Activated CD8-positive, alpha-beta T cell treated with anti-CD3 and anti-CD28 coated beads for 36 hours (primary cell): ENCODE measurements at regions of chr19 and their contacts with region 1.

Region 1: DNA sequence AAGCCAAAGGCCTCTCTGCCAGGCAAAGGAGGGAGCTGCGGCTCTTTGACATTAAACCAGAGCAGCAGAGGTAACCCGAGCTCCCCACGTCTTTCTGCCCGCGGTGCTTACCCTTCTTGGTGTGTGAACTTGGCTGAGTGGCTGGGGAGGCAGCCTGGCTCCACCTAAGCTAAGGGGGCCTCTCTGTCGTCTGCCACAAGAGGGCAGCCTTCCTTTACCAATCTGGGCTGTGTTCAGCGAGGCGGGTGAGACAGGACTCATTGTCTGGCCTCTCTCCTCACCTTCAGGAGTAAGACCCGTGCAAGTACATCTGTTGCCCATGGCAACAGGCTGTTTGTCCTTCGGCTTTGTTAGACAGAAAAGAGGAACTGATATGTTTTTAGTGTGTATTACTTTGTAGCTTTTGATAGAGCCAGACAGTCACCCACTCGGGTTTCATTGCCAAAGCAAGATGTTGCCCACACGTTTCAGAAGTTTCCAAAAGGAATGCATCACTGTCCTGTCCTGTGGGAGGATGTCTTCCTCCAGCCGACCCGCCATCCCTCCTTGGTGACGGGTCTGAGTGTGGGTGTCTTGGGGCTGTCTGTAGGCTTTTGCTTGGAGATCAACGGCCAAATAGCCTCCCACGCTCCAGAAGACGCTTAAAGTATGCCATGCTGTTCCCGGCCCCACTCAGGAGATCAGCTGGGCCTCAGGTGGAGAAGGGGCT is 4.6 kb downstream of the POP4 start:
- DNase-seq: peak; percentile 92
- ATAC-seq: peak; percentile 74
- H3K4me3 Mint-ChIP-seq: no peak overlapping the region
- H3K27ac Mint-ChIP-seq: peak overlapping the region; percentile 39
- H3K4me1 Mint-ChIP-seq: peaks cover 25% of the 10 kb centered on the region
- H3K27me3 Mint-ChIP-seq: no peaks in the 10 kb centered on the region
- CTCF ChIP-seq: peak; percentile 86

Region 2: GRCh38 chr19:29564574-29565005 is 46.1 kb before region 1 on chr19:
- CTCF ChIA-PET with region 1: no interaction called
- POLR2A ChIA-PET with region 1: no interaction called
- intact Hi-C with region 1: no loop called
- DNase-seq: peak; percentile 33
- ATAC-seq: peak; percentile 87
- H3K4me3 Mint-ChIP-seq: no peak overlapping the region
- H3K27ac Mint-ChIP-seq: no peak overlapping the region
- H3K4me1 Mint-ChIP-seq: peaks cover 14% of the 10 kb centered on the region
- H3K27me3 Mint-ChIP-seq: peaks cover 27% of the 10 kb centered on the region
- CTCF ChIP-seq: no peak

Region 3: DNA sequence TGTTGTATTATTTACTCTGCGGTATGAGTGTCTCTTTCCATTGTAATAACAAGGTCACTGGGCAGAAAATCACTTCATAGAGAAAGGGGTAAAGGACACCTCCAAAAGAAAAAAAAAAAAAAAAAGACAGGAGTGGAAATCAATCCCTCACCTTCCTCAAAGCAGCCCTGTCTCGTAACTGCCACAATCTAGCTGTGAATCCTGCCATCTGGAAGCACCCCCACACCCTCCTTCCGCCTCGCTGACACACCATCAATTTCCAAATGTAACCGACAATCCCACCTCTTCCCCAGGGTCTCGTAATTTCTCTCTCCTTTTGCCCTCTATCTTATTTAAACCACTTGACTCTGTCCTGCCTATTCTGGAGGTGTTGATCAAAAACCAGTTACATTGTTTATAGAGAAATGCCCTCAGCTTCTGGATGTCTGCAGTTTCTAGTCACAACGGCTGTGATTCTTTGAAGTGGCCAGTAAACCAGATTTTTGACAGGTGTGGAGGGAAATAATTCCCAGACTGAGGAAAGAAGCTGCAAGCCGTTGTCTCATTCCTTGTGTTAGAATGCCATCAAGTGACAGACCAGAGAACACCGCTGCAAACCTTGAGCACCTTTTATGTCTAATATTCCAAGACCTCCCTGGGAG is 13.7 kb before region 1 on chr19:
- CTCF ChIA-PET with region 1: interaction called, 11 read pairs
- POLR2A ChIA-PET with region 1: interaction called, 8 read pairs
- intact Hi-C with region 1: no loop called
- DNase-seq: no peak
- ATAC-seq: no peak
- H3K4me3 Mint-ChIP-seq: no peak overlapping the region
- H3K27ac Mint-ChIP-seq: no peak overlapping the region
- H3K4me1 Mint-ChIP-seq: no peaks in the 10 kb centered on the region
- H3K27me3 Mint-ChIP-seq: peaks cover 14% of the 10 kb centered on the region
- CTCF ChIP-seq: peak; percentile 48

Region 4: GRCh38 chr19:29665215-29665825 is 54.6 kb after region 1 on chr19 and contains the start of gene PLEKHF1:
- CTCF ChIA-PET with region 1: interaction called, 66 read pairs
- POLR2A ChIA-PET with region 1: interaction called, 36 read pairs
- intact Hi-C with region 1: no loop called
- DNase-seq: peak; percentile 87
- ATAC-seq: peak; percentile 79
- H3K4me3 Mint-ChIP-seq: peak within 1 kb of the TSS; percentile 88
- H3K27ac Mint-ChIP-seq: peak within 1 kb of the TSS; percentile 90
- H3K4me1 Mint-ChIP-seq: peaks cover 66% of the 10 kb centered on the region
- H3K27me3 Mint-ChIP-seq: no peaks in the 10 kb centered on the region
- CTCF ChIP-seq: no peak
- total RNA-seq, gene PLEKHF1: 30.4 to 31.7 TPM

Region 5: DNA sequence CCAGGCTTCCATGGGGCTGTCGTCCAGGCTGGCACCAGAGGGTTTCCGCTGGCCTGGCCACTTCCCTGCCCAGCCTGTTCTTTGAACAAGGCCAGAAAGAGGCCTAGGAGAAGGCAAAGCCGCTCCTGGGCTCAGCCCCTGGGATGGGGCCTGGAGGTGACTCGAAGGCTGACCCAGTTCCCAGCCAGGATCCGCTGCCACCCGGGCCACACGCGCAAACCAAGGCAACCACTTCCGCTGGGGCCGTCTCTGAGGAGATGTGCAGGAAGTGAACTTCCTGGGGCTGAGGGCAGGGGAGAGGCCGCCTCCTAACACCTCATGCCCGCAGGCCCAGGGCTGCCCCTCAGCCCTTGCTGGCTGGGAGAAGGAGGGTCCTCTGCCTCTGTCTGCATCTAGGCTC is 69.7 kb after region 1 on chr19:
- CTCF ChIA-PET with region 1: interaction called, 49 read pairs
- POLR2A ChIA-PET with region 1: interaction called, 9 read pairs
- intact Hi-C with region 1: no loop called
- DNase-seq: peak; percentile 92
- ATAC-seq: peak; percentile 90
- H3K4me3 Mint-ChIP-seq: peak overlapping the region; percentile 52
- H3K27ac Mint-ChIP-seq: peak overlapping the region; percentile 83
- H3K4me1 Mint-ChIP-seq: peaks cover 72% of the 10 kb centered on the region
- H3K27me3 Mint-ChIP-seq: no peaks in the 10 kb centered on the region
- CTCF ChIP-seq: no peak

Region 6: GRCh38 chr19:29694669-29695627 is 84.2 kb after region 1 on chr19:
- CTCF ChIA-PET with region 1: interaction called, 217 read pairs
- POLR2A ChIA-PET with region 1: interaction called, 20 read pairs
- intact Hi-C with region 1: loop called (anchors 1 kb)
- DNase-seq: peak; percentile 91
- ATAC-seq: peak; percentile 96
- H3K4me3 Mint-ChIP-seq: no peak overlapping the region
- H3K27ac Mint-ChIP-seq: peak overlapping the region; percentile 21
- H3K4me1 Mint-ChIP-seq: peaks cover 7% of the 10 kb centered on the region
- H3K27me3 Mint-ChIP-seq: no peaks in the 10 kb centered on the region
- CTCF ChIP-seq: peak; percentile 96

Region 7: DNA sequence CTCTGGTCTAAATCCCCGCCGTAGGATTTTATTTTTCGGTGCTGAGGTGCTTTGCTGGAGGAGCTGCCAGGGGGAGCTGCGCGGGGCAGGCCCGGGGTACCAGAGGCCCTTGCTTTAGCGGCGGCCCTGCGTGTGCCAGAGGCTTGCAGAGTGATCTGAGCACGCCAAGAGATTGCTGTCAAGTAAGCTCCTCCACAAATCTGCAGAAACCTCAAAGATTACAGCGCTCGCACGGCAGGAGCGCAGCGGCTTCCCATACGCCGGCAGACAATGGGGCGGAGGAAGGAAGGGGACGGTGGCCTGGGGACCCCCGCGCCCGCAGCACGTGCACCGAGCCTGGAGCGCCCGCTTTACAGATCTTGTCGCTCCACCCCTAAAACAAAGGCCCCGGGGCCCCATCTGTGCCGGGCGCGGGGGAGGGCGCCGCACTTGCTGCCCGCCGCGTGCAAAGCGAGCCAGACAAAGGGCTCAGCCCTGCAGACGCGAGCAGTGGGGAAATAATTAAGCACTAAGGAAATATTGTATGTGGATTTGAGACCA is 113.5 kb after region 1 on chr19:
- CTCF ChIA-PET with region 1: interaction called, 13 read pairs
- POLR2A ChIA-PET with region 1: interaction called, 4 read pairs
- intact Hi-C with region 1: no loop called
- DNase-seq: peak; percentile 69
- ATAC-seq: peak; percentile 80
- H3K4me3 Mint-ChIP-seq: peak overlapping the region; percentile 62
- H3K27ac Mint-ChIP-seq: peak overlapping the region; percentile 6
- H3K4me1 Mint-ChIP-seq: peaks cover 15% of the 10 kb centered on the region
- H3K27me3 Mint-ChIP-seq: peaks cover 3% of the 10 kb centered on the region
- CTCF ChIP-seq: no peak

Region 8: DNA sequence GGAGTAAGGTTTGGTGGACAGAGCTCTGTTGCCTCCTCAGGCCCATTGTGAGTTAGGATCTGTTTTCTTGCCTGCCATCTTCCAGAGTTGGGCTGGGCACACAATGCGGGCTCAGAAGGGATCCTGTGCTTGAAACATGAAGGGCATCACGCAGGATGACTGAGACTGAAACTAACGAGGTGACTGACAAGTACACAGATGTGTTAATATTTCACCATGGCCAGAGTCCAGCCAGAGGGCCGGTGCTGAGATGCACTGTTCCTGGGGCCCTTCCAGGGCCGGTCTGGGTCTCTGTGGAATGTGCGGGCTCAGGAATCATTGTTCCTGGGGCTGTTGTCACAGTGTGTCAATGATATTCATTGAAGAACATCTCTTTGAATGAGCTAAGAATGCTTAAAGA is 495.0 kb after region 1 on chr19:
- CTCF ChIA-PET with region 1: no interaction called
- POLR2A ChIA-PET with region 1: no interaction called
- intact Hi-C with region 1: no loop called
- DNase-seq: no peak
- ATAC-seq: no peak
- H3K4me3 Mint-ChIP-seq: no peak overlapping the region
- H3K27ac Mint-ChIP-seq: no peak overlapping the region
- H3K4me1 Mint-ChIP-seq: no peaks in the 10 kb centered on the region
- H3K27me3 Mint-ChIP-seq: no peaks in the 10 kb centered on the region
- CTCF ChIP-seq: no peak